ENCODE measurements at regions of chr9 and their contacts with region 1.

Region 1: GRCh38 chr9:112898872-112899311 is 8.2 kb upstream of the SLC46A2 start:
- DNase-seq: no peak
- ATAC-seq: no peak
- H3K4me3 Mint-ChIP-seq: no peak overlapping the region
- H3K27ac Mint-ChIP-seq: no peak overlapping the region
- H3K4me1 Mint-ChIP-seq: peaks cover 5% of the 10 kb centered on the region
- H3K27me3 Mint-ChIP-seq: peaks cover 32% of the 10 kb centered on the region

Region 2: GRCh38 chr9:112086627-112087026 is 812.3 kb before region 1 on chr9:
- CTCF ChIA-PET with region 1: no interaction called
- POLR2A ChIA-PET with region 1: no interaction called
- intact Hi-C with region 1: loop called in 1 of 2 experiments (anchors 5 kb)
- DNase-seq: no peak
- ATAC-seq: no peak
- H3K4me3 Mint-ChIP-seq: no peak overlapping the region
- H3K27ac Mint-ChIP-seq: no peak overlapping the region
- H3K4me1 Mint-ChIP-seq: no peaks in the 10 kb centered on the region
- H3K27me3 Mint-ChIP-seq: no peaks in the 10 kb centered on the region

Region 3: DNA sequence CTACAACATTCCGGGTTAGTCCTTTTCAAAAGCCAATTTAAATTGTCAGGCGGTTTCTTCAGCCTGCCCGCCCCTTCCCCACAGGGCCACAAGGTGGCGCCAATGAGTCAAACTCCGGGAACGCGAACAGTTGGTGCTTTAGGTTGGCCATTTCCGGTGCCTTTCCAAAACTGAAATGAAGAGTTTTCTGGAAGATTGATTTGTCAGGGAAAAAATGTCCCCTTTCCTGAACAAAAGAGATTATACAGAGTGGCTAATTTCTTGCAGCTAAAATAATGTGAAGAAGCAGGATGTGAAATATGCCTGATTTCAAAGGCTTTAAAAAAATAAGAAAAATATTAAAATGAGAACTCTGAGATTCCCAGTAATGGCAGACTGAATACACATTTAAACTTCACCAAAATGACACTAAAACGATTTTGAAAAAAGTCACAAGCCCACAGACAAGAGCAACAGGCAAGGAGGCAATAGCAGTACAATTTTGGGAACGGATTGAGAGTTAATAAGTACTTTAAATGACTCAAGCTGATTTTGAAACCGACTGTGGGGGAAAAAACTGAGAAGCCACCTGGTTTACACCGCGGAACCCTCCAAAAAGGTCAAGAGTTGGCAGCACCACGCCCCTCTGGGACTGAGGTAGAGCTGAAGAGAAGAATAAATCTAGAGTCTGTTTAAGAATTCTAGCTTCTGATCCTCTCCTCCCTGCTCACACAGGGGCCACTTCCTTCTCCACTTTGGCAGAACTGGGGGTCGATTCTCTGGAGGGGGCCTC is 53.9 kb before region 1 on chr9:
- CTCF ChIA-PET with region 1: interaction called, 33 read pairs
- POLR2A ChIA-PET with region 1: no interaction called
- intact Hi-C with region 1: loop called (anchors 1 kb)
- DNase-seq: peak; percentile 88
- ATAC-seq: peak; percentile 74
- H3K4me3 Mint-ChIP-seq: no peak overlapping the region
- H3K27ac Mint-ChIP-seq: no peak overlapping the region
- H3K4me1 Mint-ChIP-seq: peaks cover 18% of the 10 kb centered on the region
- H3K27me3 Mint-ChIP-seq: no peaks in the 10 kb centered on the region

Region 4: GRCh38 chr9:112921549-112921948 is 22.7 kb after region 1 on chr9:
- CTCF ChIA-PET with region 1: interaction called, 11 read pairs
- POLR2A ChIA-PET with region 1: no interaction called
- intact Hi-C with region 1: no loop called
- DNase-seq: no peak
- ATAC-seq: peak; percentile 66
- H3K4me3 Mint-ChIP-seq: no peak overlapping the region
- H3K27ac Mint-ChIP-seq: no peak overlapping the region
- H3K4me1 Mint-ChIP-seq: peaks cover 2% of the 10 kb centered on the region
- H3K27me3 Mint-ChIP-seq: peaks cover 13% of the 10 kb centered on the region